H1 (cell line): ENCODE measurements at regions of chr14 and their contacts with region 1.

Region 1: GRCh38 chr14:59126710-59127432 is 61.6 kb upstream of the DAAM1 start:
- DNase-seq: no peak
- H3K4me3 ChIP-seq: no peak overlapping the region
- H3K27ac ChIP-seq: no peak overlapping the region
- H3K4me1 ChIP-seq: no peaks in the 10 kb centered on the region
- H3K27me3 ChIP-seq: no peaks in the 10 kb centered on the region
- CTCF ChIP-seq: peak; percentile 28 to 70 (median 66)
- EP300 ChIP-seq: no peak
- POLR2A ChIP-seq: no peak
- RAD21 ChIP-seq: peak; percentile 94

Region 2: DNA sequence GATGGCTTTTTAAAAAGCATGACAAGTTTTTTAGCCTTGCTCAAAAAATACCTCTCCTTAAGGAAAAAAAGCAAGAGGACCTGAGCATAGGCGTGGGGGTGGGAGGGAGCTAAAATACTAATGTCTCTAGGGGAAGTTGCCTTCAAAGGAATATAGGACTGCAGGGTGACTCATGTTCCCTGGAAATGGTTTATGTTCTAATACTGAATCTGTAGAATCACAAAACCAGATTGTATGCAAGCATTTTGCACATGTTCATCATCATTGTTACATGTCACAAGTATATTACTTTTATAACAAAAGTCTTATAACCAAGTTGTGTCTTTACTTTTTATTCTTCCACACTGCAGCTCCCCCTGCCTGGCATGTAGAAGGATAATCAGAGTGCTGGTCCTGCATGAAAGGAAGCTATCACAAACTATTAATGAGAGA is 301.7 kb after region 1 on chr14:
- CTCF ChIA-PET with region 1: interaction called, 10 read pairs
- POLR2A ChIA-PET with region 1: no interaction called
- DNase-seq: no peak
- H3K4me3 ChIP-seq: no peak overlapping the region
- H3K27ac ChIP-seq: no peak overlapping the region
- H3K4me1 ChIP-seq: no peaks in the 10 kb centered on the region
- H3K27me3 ChIP-seq: no peaks in the 10 kb centered on the region
- CTCF ChIP-seq: no peak; a peak in 1 of 4 replicates
- EP300 ChIP-seq: no peak
- POLR2A ChIP-seq: no peak
- RAD21 ChIP-seq: no peak